GM10248 (cell line): ENCODE measurements at regions of chr9 and their contacts with region 1.

Region 1: DNA sequence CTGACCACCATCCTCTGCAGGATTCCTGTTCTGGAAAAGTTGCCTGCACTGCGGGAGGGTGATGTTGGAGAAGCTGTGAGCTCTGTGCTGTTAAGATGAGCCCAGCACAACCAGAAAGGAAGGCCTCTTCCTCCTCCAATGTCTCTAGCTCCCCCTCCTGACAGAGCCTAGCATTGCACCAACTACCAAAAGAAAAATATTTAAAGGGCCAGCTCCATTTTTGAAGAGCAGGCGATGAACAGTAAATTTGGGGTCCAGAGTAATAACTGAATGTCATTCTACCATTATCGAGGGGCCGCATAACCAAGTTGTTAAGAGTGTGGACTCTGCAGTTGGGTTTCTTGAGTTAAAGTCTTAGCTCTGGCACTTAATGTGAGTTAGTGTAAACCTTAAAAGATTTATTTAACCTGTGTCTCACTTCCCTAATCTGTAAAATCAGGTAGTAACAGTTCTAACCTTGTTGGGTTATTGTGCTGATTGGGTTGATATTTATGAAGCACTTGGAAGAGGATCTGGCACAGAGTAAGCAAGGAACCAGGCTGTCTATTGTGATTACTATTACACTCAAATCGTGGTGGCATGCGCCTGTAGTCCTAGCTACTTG is 3.9 kb downstream of the TEX53 start:
- DNase-seq: peak; percentile 77
- CTCF ChIP-seq: peak; percentile 88

Region 2: DNA sequence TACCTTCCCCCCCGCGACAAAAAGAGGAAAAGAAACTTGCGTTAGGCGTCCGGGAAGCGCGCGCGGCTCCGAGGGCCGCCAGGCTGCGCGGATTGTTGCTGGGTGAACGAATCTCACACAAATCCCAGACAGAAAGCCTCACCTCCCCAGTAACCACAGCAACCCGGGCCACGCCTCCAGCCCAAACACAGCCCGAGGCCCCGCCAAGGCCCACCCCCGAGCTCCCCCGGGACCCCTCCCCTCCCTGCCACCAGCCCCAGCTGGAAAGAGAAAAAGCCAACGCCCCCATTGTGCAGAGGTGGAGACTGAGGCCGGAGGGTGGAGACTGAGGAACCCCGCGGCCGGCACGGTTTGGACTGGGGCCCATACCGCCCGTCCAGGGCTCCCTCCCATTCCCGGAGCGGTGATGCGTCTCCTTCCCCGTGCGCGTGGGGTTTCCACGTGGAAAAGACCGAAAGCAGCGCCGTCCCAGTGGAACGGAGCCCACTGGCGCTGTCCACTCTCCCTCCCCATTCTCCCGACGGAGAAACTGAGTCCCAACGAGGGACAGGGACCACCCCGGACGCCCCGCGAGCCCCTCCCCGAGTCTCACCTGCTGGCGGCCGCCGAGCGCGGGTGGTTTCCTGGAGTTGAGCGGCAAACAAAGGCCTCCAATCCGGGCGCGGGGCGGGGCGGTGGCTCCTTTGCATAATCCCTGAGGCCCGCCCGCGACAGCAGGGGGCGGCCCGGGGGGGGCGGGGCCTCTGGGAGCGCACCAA is 255.6 kb before region 1 on chr9:
- CTCF ChIA-PET with region 1: interaction called, 173 read pairs
- POLR2A ChIA-PET with region 1: no interaction called
- DNase-seq: peak; percentile 98
- CTCF ChIP-seq: no peak

Region 3: DNA sequence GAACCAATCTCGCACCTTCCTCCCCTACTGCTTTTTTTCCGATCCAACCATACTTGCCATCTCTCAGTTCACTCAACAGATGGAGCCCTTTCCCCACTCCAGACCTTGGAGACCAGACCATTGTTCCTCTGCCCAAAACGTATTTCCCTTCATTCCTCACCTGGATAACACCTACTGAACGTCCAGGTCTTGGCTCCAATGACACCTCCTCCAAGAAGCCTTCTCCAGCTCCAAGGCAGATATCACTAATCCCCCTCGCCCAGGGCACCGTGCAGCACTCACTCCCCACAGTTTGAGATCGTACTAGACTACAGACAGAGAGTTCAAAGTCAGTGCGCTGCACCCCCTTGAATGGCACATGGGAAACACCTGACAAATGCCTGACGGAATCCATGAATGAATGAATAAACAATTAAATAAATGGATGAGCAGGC is 218.8 kb before region 1 on chr9:
- CTCF ChIA-PET with region 1: interaction called, 104 read pairs
- POLR2A ChIA-PET with region 1: no interaction called
- DNase-seq: peak; percentile 62
- CTCF ChIP-seq: peak; percentile 63

Region 4: DNA sequence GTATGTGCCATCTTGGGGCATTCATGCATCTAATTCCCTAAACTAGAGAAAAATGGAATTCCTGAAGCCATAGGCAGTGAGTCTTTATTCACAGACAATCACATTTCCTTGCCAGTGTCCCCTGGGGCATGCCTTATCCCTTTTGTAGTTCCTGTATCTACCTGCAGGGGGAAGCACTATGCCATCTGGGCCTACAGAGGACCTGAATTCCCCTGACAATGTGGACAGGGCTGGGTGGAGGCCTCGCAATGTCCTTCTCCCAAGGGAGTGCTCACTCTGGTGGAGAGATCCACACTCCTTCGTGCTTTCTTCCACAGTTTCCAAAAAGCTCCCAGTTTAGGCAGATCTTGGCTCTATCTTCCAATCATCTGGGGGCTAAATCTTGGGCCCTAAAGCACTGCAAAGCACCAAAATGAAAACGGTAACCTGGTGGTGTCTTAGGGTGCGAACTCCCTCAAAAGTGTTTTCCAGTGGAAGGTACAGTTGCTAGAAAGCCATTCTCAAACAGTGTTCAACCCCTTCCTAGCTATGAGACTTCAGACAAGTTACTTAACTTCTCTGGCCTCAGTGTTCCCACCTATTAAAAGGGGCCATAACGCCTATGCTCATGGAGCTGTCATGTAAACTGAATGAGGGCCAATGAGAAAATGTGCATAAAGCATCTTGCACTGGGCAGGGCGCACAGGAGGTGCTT is 165.9 kb before region 1 on chr9:
- CTCF ChIA-PET with region 1: interaction called, 84 read pairs
- POLR2A ChIA-PET with region 1: no interaction called
- DNase-seq: peak; percentile 70
- CTCF ChIP-seq: peak; percentile 80

Region 5: DNA sequence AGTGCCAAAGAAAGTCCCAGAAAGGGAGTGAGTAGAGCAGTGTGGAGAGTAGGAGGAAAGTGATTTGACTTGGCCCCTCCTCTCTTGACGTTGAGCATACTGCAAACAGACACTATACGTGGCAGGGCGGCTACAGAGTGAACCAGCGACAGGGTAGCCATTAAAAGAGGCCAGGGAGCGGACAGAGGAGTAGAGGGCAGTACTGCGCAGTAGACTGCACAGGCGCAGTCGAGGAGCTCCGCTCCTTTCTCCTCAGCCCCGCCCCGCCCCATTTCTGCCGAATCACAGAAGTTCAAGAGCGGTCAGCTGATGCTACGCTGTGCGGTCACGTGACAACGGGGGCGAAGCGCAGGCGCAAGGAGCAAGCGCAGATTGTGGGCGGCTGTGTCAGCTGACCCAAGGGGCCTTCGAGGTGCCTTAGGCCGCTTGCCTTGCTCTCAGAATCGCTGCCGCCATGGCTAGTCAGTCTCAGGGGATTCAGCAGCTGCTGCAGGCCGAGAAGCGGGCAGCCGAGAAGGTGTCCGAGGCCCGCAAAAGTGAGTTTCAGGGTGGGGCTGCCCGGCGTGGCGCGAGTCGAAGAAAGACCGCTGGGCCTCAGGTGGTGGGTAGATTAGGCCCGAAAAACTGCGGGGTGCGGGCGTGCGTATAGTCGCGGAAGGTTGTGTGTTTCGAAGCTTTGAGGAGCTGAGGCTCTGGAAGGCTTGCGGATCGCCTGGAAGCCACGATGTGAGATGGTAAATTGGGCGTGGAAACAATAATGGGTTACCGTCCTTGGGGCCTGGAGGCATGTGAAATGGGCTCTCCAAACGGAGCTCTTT is 66.1 kb before region 1 on chr9 and contains the start of gene ATP6V1G1:
- CTCF ChIA-PET with region 1: interaction called, 49 read pairs
- POLR2A ChIA-PET with region 1: interaction called, 11 read pairs
- DNase-seq: peak; percentile 96
- CTCF ChIP-seq: peak; percentile 16

Region 6: DNA sequence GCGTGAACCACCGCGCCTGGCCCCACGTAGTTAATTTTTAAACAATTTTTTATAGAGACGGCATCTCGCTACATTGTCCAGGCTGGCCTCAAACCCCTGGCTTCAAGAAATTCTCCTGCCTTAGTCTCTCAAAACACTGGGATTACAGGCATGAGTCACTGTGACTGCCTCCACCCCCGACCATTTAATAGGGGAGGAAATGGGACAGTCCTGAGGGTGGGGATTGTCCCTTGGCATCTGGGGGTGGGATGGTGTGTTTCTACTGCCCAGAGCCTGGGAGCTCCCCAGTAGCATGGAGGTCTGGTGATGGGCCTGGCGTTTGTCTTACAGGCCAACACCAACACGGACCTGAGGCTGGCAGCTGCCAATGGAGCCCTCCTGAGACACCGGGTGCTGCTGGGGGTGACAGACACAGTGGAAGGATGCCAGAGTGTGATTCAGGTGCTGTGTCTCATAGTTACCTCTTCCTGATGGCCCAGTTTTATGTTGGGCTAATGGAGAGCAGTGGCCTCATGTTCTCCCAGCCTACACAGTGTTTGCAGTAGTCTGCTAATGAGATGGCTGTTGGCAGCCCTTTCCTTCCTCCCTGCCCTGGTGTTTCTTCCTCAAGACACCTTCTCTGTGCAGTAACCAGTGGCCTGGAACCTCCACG is 20.1 kb before region 1 on chr9:
- CTCF ChIA-PET with region 1: interaction called, 35 read pairs
- POLR2A ChIA-PET with region 1: no interaction called
- DNase-seq: no peak
- CTCF ChIP-seq: no peak